ENCODE measurements at regions of chr4 and their contacts with region 1.

Region 1: DNA sequence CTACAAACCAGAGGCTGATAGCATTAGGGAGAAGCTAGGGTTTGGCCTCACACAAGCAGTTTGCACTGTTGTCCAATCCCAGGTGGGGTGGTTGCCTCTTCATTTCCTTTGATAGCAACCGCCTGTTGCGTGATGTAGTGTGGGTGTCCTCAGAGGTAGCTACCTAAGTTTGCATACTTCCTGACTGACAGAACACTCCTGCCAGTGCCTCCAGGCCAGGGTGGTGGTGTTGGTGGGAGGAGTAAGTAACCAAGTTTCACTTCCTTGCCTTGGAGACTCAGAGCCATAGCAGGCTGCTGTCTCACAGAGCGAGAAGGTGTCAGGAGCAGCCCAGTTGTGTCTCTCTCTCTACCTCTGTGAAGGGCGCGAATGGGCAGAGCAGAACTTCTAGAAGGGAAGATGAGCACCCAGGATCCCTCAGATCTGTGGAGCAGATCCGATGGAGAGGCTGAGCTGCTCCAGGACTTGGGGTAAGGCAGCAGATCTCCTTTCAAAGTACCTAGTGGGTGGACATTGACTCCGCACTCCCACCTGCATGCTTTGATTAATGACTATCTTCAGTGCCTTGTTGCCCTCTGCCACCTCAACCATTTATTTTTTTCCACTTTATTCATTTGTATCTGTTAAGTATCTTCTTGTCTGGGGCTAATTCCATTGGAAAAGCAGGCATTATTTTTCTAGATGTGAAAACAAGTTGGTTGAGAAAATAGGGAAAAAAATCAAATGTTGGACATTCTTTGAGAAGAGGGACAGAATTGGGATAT is at the start of gene DAPP1:
- DNase-seq: peak; percentile 74
- ATAC-seq: peak; percentile 99
- H3K4me3 Mint-ChIP-seq: peak within 1 kb of the TSS; percentile 82
- H3K27ac Mint-ChIP-seq: peak within 1 kb of the TSS; percentile 97
- H3K4me1 Mint-ChIP-seq: peaks cover 49% of the 10 kb centered on the region
- H3K27me3 Mint-ChIP-seq: no peaks in the 10 kb centered on the region
- total RNA-seq, gene DAPP1: 19.6 to 22.8 TPM

Region 2: GRCh38 chr4:99563310-99564186 is 253.2 kb before region 1 on chr4 and contains the start of gene TRMT10A:
- POLR2A ChIA-PET with region 1: interaction called, 11 read pairs
- DNase-seq: peak; percentile 91
- ATAC-seq: peak; percentile 93
- H3K4me3 Mint-ChIP-seq: peak within 1 kb of the TSS; percentile 94
- H3K27ac Mint-ChIP-seq: peak within 1 kb of the TSS; percentile 97
- H3K4me1 Mint-ChIP-seq: peaks cover 14% of the 10 kb centered on the region
- H3K27me3 Mint-ChIP-seq: peaks cover 21% of the 10 kb centered on the region
- total RNA-seq, gene TRMT10A: 5.5 to 6.3 TPM

Region 3: GRCh38 chr4:99847362-99847976 is 30.7 kb after region 1 on chr4:
- POLR2A ChIA-PET with region 1: interaction called, 27 read pairs
- DNase-seq: no peak
- ATAC-seq: peak; percentile 70
- H3K4me3 Mint-ChIP-seq: peak overlapping the region; percentile 71
- H3K27ac Mint-ChIP-seq: peak overlapping the region; percentile 96
- H3K4me1 Mint-ChIP-seq: peaks cover 53% of the 10 kb centered on the region
- H3K27me3 Mint-ChIP-seq: no peaks in the 10 kb centered on the region

Region 4: DNA sequence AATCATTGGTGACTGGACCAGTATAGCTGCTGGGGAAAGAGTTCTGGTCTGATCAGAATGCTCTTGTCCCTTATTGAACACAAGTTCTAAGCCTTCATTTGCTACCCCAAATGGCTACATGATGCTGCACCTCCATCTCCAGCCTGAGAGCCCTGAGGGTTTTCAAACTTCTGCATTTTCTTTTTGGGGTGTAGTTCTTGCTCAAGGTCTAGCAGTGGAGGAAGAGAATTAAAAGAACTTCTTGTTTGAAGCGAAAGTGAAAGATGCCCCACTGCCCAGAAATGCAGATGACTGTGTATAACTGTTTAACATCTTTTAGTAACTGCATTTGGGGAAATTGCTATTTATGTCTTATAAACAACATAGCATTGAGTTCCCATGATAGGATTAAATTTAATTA is 39.0 kb after region 1 on chr4:
- POLR2A ChIA-PET with region 1: interaction called, 18 read pairs
- DNase-seq: no peak
- ATAC-seq: peak; percentile 60
- H3K4me3 Mint-ChIP-seq: peak overlapping the region; percentile 60
- H3K27ac Mint-ChIP-seq: peak overlapping the region; percentile 75
- H3K4me1 Mint-ChIP-seq: peaks cover 48% of the 10 kb centered on the region
- H3K27me3 Mint-ChIP-seq: no peaks in the 10 kb centered on the region

Region 5: GRCh38 chr4:99894161-99894997 is 77.7 kb after region 1 on chr4 and contains the start of gene LAMTOR3:
- POLR2A ChIA-PET with region 1: interaction called, 22 read pairs
- DNase-seq: peak; percentile 86
- ATAC-seq: peak; percentile 100
- H3K4me3 Mint-ChIP-seq: peak within 1 kb of the TSS; percentile 97
- H3K27ac Mint-ChIP-seq: peak within 1 kb of the TSS; percentile 97
- H3K4me1 Mint-ChIP-seq: peaks cover 25% of the 10 kb centered on the region
- H3K27me3 Mint-ChIP-seq: no peaks in the 10 kb centered on the region
- total RNA-seq, gene LAMTOR3: 27.4 to 28.3 TPM

Region 6: DNA sequence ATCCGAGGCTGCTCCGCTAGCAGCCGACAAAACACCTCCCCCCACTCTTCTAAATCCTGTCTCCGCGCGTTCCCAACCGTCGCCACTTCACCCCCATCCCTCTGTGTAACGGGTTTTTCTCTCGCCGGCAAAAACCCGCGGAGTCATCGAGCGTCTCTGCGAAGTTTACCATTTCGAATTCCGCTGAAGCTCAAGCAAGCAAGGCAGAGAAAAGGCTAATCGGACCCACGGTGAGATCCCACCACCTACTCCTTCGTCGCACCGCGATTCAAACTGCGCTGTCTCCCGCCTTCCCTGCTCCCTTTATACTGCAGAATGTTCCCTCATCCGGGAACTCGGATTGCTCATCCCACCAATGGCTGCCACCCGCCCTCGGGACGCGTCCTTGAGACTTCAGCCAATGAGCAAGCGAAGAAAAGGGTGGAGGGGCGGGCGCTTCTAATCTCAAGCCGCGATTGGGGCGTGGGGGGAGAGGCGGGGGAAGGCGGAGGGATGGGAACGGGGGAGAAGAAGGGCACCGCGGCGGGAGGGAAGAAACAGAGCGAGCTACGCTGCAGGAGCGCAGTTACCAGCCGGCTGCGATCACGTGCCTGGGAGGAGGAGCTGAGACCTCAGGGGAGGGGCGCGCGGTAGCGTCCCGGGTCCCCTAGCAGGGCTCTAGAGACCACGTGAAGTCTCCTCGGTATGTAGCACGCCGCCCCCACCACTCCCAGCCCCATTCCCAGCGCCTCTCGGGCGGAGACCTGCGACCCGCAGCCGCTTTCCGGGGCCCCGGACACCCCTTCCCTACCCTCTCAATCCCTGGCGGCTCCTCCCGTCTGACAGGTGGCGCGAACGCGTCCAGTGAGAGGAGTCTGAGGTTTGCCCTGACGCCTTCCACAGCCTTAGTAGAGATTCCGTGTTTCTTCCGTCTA is 133.5 kb after region 1 on chr4 and contains the start of gene H2AZ1:
- POLR2A ChIA-PET with region 1: interaction called, 27 read pairs
- DNase-seq: peak; percentile 90
- ATAC-seq: peak; percentile 68
- H3K4me3 Mint-ChIP-seq: no peak within 1 kb of the TSS
- H3K27ac Mint-ChIP-seq: no peak within 1 kb of the TSS
- H3K4me1 Mint-ChIP-seq: peaks cover 26% of the 10 kb centered on the region
- H3K27me3 Mint-ChIP-seq: no peaks in the 10 kb centered on the region
- total RNA-seq, gene H2AZ1: 399 to 400 TPM

Measured in activated naive CD8-positive, alpha-beta T cell treated with anti-CD3 and anti-CD28 coated beads, Interleukin-2, amount 10 ng/mL, durations not matched to agents 7 days and 5 days (primary cell).